ENCODE measurements at regions of chr11 and their contacts with region 1.

Region 1: GRCh38 chr11:19577976-19578619 is 134.5 kb upstream of the NAV2 start:
- DNase-seq: no peak
- H3K4me3 ChIP-seq: no peak overlapping the region
- H3K27ac ChIP-seq: peak overlapping the region in 1 of 2 donors; percentile 43
- H3K4me1 ChIP-seq: peaks cover 20% of the 10 kb centered on the region
- H3K27me3 ChIP-seq: no peaks in the 10 kb centered on the region
- CTCF ChIP-seq: no peak
- POLR2A ChIP-seq: no peak

Region 2: GRCh38 chr11:19730373-19730772 is 152.3 kb after region 1 on chr11:
- intact Hi-C with region 1: loop called (anchors 5 kb)
- DNase-seq: no peak
- H3K4me3 ChIP-seq: no peak overlapping the region
- H3K27ac ChIP-seq: no peak overlapping the region
- H3K4me1 ChIP-seq: no peaks in the 10 kb centered on the region
- H3K27me3 ChIP-seq: no peaks in the 10 kb centered on the region
- CTCF ChIP-seq: no peak
- POLR2A ChIP-seq: no peak

Region 3: GRCh38 chr11:19970944-19971343 is 392.8 kb after region 1 on chr11:
- intact Hi-C with region 1: no loop called
- DNase-seq: no peak
- H3K4me3 ChIP-seq: no peak overlapping the region
- H3K27ac ChIP-seq: no peak overlapping the region
- H3K4me1 ChIP-seq: no peaks in the 10 kb centered on the region
- H3K27me3 ChIP-seq: no peaks in the 10 kb centered on the region
- CTCF ChIP-seq: no peak
- POLR2A ChIP-seq: no peak